A673 (cell line): ENCODE measurements at regions of chr2 and their contacts with region 1.

Region 1: DNA sequence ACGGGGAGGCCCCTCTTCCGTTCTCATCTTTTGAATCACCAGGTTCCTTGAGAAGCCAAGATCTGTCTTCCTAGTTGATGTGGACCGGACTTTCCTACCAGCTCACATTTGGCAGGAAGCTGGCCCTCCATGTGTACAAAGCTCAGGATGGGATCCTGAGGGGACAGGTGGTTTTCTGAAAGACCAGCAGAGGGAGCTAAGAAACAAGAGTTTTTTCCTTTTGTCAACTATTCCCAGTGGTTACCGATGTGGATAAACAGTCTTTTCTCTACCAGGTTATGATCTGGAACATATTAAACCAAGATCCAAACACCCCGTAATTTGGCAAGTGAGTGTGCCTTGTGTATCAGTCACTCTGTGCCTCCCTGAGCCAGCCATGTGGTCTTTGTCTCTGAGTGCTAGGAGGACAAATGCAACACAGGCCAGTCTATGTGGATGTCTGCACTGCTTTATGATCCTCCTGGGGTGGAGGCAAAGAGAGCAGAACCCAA is 25.1 kb upstream of the ARHGAP25 start:
- DNase-seq: peak; percentile 82
- H3K4me3 ChIP-seq: no peak overlapping the region
- H3K27ac ChIP-seq: no peak overlapping the region
- H3K4me1 ChIP-seq: no peaks in the 10 kb centered on the region
- H3K27me3 ChIP-seq: no peaks in the 10 kb centered on the region
- CTCF ChIP-seq: peak; percentile 86

Region 2: GRCh38 chr2:68925295-68925896 is 215.9 kb after region 1 on chr2:
- CTCF ChIA-PET with region 1: interaction called, 6 read pairs
- POLR2A ChIA-PET with region 1: no interaction called
- intact Hi-C with region 1: loop called (anchors 5 kb)
- DNase-seq: peak; percentile 62
- H3K4me3 ChIP-seq: no peak overlapping the region
- H3K27ac ChIP-seq: no peak overlapping the region
- H3K4me1 ChIP-seq: no peaks in the 10 kb centered on the region
- H3K27me3 ChIP-seq: no peaks in the 10 kb centered on the region
- CTCF ChIP-seq: peak; percentile 80

Region 3: GRCh38 chr2:69163109-69163508 is 453.6 kb after region 1 on chr2:
- CTCF ChIA-PET with region 1: no interaction called
- POLR2A ChIA-PET with region 1: no interaction called
- intact Hi-C with region 1: no loop called
- DNase-seq: peak; percentile 23
- H3K4me3 ChIP-seq: no peak overlapping the region
- H3K27ac ChIP-seq: no peak overlapping the region
- H3K4me1 ChIP-seq: no peaks in the 10 kb centered on the region
- H3K27me3 ChIP-seq: no peaks in the 10 kb centered on the region
- CTCF ChIP-seq: no peak